ENCODE measurements at regions of chr19 and their contacts with region 1.

Region 1: DNA sequence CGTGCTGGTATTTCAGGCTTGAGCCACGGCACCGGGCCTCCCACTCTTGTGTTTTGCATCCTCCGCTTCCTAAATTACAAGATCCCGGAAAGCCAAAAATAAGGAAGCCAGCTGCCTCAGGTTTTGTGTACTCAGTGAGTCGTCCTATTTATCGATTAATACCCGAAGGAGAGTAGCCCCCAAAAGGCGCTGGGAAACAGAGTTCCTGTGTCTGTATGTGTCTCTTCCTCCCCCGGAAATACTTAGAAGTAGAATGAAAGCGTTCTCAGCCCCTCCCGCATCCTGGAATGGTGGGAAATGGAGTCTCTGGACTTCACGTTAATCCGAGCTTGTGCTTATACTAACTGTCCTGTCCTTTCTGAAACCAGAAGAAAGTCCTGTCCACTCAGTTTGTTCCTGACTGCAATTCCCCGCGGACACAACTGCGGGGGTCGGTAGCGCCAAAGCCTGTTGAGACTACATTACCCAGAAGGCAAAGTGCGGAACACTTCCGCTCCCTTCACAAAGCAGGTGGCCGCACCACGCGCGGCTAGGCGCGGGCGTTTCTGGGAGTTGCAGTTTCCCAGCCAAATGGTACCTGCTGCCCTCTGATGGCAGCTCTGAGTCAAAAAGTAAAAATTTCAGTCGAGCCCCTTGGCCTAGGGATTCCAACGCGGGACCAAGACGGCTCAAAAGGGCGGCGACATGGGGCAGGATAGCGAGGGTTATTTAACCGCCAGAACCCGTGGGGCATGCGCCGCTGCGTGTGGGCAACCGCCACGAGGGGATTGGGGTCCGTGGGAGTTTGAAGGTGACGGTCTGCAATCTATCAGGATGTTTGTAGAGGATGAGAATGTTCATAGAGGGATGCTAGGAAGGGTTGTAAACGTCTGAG is 2.2 kb upstream of the GSK3A start:
- DNase-seq: peak; percentile 81 to 94 (median 90)
- ATAC-seq: peak; percentile 36 to 43
- H3K4me3 Mint-ChIP-seq: peak overlapping the region; percentile 88 to 99 (median 98)
- H3K27ac Mint-ChIP-seq: peak overlapping the region; percentile 91 to 99 (median 98)
- H3K4me1 Mint-ChIP-seq: peaks cover 24 to 65% (median 54%) of the 10 kb centered on the region in 4 donors
- H3K27me3 Mint-ChIP-seq: no peaks in the 10 kb centered on the region

Region 2: GRCh38 chr19:42098781-42099180 is 145.8 kb before region 1 on chr19:
- POLR2A ChIA-PET with region 1: no interaction called
- DNase-seq: no peak
- ATAC-seq: no peak
- H3K4me3 Mint-ChIP-seq: no peak overlapping the region
- H3K27ac Mint-ChIP-seq: no peak overlapping the region
- H3K4me1 Mint-ChIP-seq: peaks cover 0 to 5% (median under 1%) of the 10 kb centered on the region in 4 donors
- H3K27me3 Mint-ChIP-seq: no peaks in the 10 kb centered on the region

Region 3: DNA sequence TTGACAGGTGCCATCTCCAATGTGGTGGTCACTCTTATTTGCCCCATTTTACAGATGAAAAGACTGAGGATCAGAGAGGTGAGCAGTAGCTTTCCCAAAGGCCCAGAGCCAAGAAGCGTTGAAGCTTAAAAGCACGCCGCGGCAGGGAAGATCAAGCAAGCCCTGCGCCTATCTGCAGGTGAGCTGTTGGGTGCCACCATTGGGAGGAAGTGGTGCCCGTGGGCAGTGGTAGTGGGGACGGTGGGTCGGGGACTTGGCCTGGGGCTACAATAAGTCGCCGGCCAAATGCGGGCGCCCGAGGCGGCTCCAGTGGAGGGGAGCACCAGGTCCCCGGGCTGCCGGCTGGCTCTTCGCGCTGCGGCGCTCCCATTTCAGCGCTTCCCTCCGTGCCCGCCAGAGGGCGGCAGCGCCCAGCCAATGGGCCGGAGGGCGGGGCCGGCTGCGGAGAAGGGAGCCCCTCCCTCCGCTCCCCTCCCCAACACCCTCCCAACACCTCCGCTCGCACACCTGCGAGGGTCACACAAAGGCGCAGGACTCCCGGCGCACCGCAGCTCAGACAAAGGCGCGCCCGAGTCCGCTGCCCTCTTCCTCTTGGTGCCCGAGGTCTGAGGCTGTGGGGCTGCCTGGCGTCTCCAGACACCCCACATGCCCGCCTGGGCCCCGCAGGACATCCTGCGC is 111.6 kb before region 1 on chr19:
- POLR2A ChIA-PET with region 1: interaction called, 11 read pairs
- DNase-seq: peak; percentile 72 to 91 (median 88)
- ATAC-seq: peak; percentile 59 to 65
- H3K4me3 Mint-ChIP-seq: peak overlapping the region; percentile 82 to 96 (median 90)
- H3K27ac Mint-ChIP-seq: peak overlapping the region; percentile 75 to 98 (median 92)
- H3K4me1 Mint-ChIP-seq: peaks cover 50 to 79% (median 78%) of the 10 kb centered on the region in 4 donors
- H3K27me3 Mint-ChIP-seq: no peaks in the 10 kb centered on the region

Region 4: GRCh38 chr19:42199440-42200115 is 45.0 kb before region 1 on chr19:
- POLR2A ChIA-PET with region 1: interaction called, 28 read pairs
- DNase-seq: peak in 8 of 10 donors; percentile 23 to 77 (median 47)
- ATAC-seq: peak; percentile 50 to 53
- H3K4me3 Mint-ChIP-seq: peak overlapping the region; percentile 73 to 89 (median 86)
- H3K27ac Mint-ChIP-seq: peak overlapping the region; percentile 88 to 97 (median 92)
- H3K4me1 Mint-ChIP-seq: peaks cover 58 to 90% (median 83%) of the 10 kb centered on the region in 4 donors
- H3K27me3 Mint-ChIP-seq: no peaks in the 10 kb centered on the region

Region 5: DNA sequence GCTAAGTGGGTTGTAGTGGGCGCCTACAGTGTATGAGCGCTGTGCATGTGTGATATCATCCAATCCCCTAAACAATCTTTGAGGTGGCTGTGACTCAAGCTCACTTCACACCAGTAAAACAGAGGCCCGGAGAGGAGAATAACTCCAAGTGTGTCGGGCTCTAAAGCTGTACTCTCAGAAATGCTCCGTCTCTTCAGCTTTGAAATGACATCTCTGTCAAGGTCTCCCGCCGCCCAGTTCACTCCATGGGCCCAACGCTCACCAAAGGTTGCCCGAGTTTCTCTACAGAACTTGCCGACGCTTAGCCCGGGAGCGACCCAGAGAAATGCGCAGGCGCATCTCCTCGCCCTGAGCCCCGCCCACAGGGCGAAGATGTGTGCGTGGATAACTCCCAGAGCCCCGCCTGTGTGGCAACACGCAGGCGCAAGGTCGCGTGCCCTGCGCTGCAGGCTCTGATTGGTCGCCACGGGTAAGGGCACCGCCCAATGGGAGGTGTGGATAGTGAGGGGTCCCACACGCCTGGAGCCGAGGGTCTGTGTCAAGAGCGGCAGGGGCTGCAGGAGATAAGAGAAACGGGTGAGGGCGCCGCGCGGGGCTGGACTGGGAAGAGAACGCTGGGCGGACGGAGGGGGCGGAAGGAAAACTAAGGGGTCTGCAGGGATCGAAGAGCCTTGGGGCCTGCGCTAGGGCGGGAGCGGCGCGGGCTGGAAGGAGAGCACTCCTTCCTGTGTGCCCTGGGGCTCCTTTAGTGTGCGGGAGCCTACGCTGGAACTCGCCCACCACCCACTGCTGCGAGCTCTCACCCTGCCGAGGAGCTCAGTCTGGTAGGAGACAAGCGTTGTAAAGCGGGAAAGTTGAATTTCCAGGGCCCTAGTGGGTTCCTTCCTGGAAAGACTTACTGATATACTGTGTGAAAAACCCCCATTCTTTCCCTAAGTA is 24.5 kb before region 1 on chr19 and contains the start of gene ZNF526:
- POLR2A ChIA-PET with region 1: interaction called, 26 read pairs
- DNase-seq: peak; percentile 93 to 98 (median 96)
- ATAC-seq: peak; percentile 82 to 84
- H3K4me3 Mint-ChIP-seq: peak within 1 kb of the TSS; percentile 96 to 100 (median 100)
- H3K27ac Mint-ChIP-seq: peak within 1 kb of the TSS; percentile 94 to 100 (median 98)
- H3K4me1 Mint-ChIP-seq: peaks cover 36 to 69% (median 64%) of the 10 kb centered on the region in 4 donors
- H3K27me3 Mint-ChIP-seq: peaks cover 0 to 2% (median 0%) of the 10 kb centered on the region in 5 donors
- polyA plus RNA-seq, gene ZNF526: 3.9 to 8.1 (median 4.5) TPM

Region 6: GRCh38 chr19:42254989-42255765 is 10.6 kb after region 1 on chr19 and contains the start of gene ERF:
- POLR2A ChIA-PET with region 1: interaction called, 23 read pairs
- DNase-seq: peak; percentile 89 to 97 (median 94)
- ATAC-seq: peak; percentile 64 to 78
- H3K4me3 Mint-ChIP-seq: peak within 1 kb of the TSS; percentile 77 to 92 (median 82)
- H3K27ac Mint-ChIP-seq: peak within 1 kb of the TSS in 9 of 10 donors; percentile 67 to 96 (median 92)
- H3K4me1 Mint-ChIP-seq: peaks cover 16 to 44% (median 35%) of the 10 kb centered on the region in 4 donors
- H3K27me3 Mint-ChIP-seq: no peaks in the 10 kb centered on the region
- polyA plus RNA-seq, gene ERF: 2.8 to 6.2 (median 4.6) TPM

Region 7: DNA sequence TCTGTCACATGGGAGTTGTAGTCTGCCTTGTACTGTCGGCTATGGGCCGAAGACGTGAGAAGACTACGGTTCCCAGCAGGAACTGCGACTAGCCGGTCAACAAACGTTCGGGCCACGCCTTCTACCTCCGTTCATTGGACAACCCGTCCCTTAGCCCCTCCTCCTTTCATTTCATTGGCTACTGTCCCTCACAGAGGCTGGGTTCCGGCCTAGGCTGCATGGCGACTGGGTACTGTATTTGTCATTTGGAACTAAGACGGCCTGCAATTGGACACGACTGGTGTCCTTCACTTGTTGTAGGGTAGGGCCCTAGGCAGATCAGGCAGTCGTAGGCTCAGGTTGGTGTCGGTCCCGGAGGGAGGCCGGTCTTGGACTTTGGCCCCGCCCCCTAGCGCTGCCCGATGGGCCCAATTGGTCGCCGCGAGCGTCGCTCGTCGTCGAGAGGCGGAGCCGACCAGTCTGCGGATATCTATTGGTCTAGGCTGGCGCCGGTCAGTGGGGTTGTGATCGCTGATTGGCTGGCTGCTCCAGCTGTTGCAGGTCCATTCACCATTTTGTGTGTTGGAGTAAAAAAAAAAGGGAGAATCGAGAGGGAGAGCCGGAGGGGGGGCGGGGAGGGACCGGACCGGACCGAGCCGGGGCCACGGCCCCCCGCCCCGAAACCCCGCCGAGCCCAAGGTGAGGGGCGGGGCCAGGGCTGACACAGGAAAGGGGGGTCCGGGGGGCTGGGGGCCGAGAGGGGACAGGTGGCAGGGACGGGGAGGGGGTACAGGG is 24.3 kb after region 1 on chr19 and contains the start of gene CIC:
- POLR2A ChIA-PET with region 1: interaction called, 29 read pairs
- DNase-seq: peak; percentile 97 to 100 (median 100)
- ATAC-seq: peak; percentile 81 to 82
- H3K4me3 Mint-ChIP-seq: peak within 1 kb of the TSS in 6 of 10 donors; percentile 90 to 98 (median 94)
- H3K27ac Mint-ChIP-seq: peak within 1 kb of the TSS in 5 of 10 donors; percentile 97 to 99 (median 99)
- H3K4me1 Mint-ChIP-seq: peaks cover 0 to 37% (median 25%) of the 10 kb centered on the region in 4 donors
- H3K27me3 Mint-ChIP-seq: no peaks in the 10 kb centered on the region
- polyA plus RNA-seq, gene CIC: 0.43 to 1.8 (median 1.3) TPM

Region 8: GRCh38 chr19:42283143-42284065 is 38.8 kb after region 1 on chr19:
- POLR2A ChIA-PET with region 1: interaction called, 121 read pairs
- DNase-seq: peak; percentile 91 to 99 (median 96)
- ATAC-seq: peak; percentile 61 to 71
- H3K4me3 Mint-ChIP-seq: no peak overlapping the region
- H3K27ac Mint-ChIP-seq: no peak overlapping the region
- H3K4me1 Mint-ChIP-seq: peaks cover 33 to 46% (median 35%) of the 10 kb centered on the region in 4 donors
- H3K27me3 Mint-ChIP-seq: no peaks in the 10 kb centered on the region